Activated CD4-positive, alpha-beta memory T cell treated with anti-CD3 and anti-CD28 coated beads for 36 hours (primary cell): ENCODE measurements at regions of chr15 and their contacts with region 1.

Region 1: DNA sequence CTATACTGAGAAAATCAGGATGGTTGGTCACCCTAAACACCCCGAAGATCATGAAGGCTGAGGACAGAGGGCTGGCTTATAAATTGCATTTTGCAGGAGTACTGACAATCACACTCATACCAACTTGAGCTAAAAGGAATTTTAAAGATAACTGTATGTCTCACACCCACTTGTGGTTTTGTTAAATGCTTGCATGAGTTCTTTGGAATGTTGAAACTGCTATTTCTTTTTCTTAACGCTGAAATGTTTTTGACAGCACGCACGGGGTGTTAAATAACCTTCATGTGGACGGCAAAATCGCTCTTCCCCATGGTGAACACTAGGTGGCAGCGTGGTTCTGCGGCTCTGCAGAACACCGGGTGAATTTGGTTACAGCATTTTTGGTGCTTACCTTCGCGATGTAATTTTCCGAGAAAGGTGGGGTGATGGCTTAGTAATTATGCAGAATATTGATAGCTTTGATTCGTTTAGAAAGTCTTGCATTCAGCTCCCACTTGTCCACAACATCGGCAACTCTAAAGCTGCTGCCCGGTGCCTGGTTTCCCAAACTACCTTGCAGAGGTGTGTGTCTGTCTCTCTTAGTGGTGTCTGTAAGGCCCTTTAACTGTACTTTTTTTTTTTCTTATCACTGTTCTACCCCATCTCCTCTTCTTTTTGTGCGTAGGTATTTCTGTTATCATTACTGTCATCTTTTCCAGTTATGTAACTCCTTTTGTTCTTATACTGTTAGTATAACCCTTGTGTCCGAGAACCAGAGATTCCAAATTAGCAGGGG is 51.7 kb downstream of the ARNT2 start:
- DNase-seq: peak; percentile 67
- H3K4me3 Mint-ChIP-seq: no peak overlapping the region
- H3K27ac Mint-ChIP-seq: no peak overlapping the region
- H3K4me1 Mint-ChIP-seq: peaks cover 5% of the 10 kb centered on the region
- H3K27me3 Mint-ChIP-seq: peaks cover 12% of the 10 kb centered on the region

Region 2: DNA sequence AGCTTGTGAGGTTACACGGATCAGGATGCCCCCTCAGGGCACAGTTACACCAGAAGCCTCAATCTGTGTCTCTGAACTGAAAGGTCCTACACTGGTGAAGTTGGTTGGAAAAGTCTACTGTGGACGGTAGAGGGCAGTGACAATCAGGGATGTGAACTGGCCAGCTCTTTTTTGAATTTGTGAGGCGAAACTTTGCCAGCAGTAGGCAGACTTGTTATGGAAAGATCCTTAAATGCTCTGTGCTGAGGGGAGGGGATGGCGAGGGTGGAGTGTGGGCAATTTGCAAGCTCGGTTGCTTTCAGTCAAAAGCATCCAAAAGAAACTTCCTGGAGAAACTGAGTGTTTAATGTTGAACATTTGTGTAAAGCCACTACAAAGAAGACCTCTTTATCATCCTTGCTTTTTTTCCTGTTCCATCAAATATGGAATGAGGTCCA is 111.9 kb after region 1 on chr15:
- CTCF ChIA-PET with region 1: interaction called, 6 read pairs
- POLR2A ChIA-PET with region 1: no interaction called
- intact Hi-C with region 1: loop called (anchors 5 kb)
- DNase-seq: peak; percentile 29
- H3K4me3 Mint-ChIP-seq: no peak overlapping the region
- H3K27ac Mint-ChIP-seq: no peak overlapping the region
- H3K4me1 Mint-ChIP-seq: peaks cover 3% of the 10 kb centered on the region
- H3K27me3 Mint-ChIP-seq: peaks cover 25% of the 10 kb centered on the region

Region 3: DNA sequence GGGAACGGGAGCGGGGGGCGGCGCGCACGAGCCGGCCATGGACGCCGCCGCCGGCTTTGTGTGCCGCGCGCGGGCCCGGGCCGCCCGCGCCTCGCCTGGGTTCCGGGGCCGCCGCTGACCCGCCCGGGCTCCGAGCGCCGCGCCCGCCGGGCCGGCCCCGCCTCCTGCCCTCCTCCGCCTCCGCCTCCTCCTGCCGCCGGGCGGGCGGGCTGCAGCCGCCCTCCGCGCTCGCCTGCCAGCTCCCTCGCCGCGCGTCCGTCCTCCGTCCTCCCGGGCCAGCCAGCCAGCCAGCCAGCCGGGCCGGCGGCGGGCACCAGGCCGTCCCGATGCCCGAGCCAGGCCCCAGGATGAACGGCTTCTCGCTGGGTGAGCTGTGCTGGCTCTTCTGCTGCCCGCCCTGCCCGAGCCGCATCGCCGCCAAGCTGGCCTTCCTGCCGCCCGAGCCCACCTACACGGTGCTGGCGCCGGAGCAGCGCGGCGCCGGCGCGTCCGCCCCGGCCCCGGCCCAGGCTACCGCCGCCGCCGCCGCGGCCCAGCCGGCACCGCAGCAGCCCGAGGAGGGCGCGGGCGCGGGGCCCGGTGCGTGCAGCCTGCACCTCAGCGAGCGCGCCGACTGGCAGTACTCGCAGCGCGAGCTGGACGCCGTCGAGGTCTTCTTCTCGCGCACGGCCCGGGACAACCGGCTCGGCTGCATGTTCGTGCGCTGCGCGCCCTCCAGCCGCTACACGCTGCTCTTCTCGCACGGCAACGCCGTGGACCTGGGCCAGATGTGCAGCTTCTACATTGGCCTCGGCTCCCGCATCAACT is 239.5 kb after region 1 on chr15 and contains the start of gene ABHD17C:
- CTCF ChIA-PET with region 1: interaction called, 3 read pairs
- POLR2A ChIA-PET with region 1: no interaction called
- intact Hi-C with region 1: loop called (anchors 5 kb)
- DNase-seq: peak; percentile 55
- H3K4me3 Mint-ChIP-seq: peak within 1 kb of the TSS; percentile 86
- H3K27ac Mint-ChIP-seq: peak within 1 kb of the TSS; percentile 71
- H3K4me1 Mint-ChIP-seq: peaks cover 21% of the 10 kb centered on the region
- H3K27me3 Mint-ChIP-seq: peaks cover 3% of the 10 kb centered on the region
- total RNA-seq, gene ABHD17C: 6.1 to 9.0 TPM